MCF 10A (cell line): ENCODE measurements at regions of chr4 and their contacts with region 1.

Region 1: DNA sequence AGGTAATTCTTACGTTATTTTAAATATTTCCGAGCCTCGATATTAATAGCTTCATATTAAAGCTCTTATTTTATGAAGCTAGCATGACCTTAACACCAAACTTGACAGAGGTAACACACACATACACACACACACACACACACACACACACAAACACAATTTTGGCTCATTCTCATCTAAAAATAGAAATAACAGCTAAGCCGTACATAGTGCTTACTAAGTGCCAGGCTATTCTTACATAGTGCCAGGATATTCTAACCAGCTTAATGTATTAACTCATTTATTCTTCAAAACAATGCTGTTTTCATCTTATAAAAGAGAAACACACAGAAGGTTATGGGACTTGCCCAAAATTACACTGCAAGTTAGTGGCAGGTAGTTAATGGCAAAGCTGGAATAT is 87.0 kb upstream of the BLTP1 start:
- DNase-seq: no peak
- H3K4me3 Mint-ChIP-seq: no peak overlapping the region
- H3K27ac Mint-ChIP-seq: no peak overlapping the region
- H3K4me1 Mint-ChIP-seq: peaks cover 5% of the 10 kb centered on the region
- H3K27me3 Mint-ChIP-seq: no peaks in the 10 kb centered on the region
- CTCF ChIP-seq: no peak

Region 2: GRCh38 chr4:121998002-121998401 is 67.1 kb before region 1 on chr4:
- CTCF ChIA-PET with region 1: no interaction called
- POLR2A ChIA-PET with region 1: no interaction called
- intact Hi-C with region 1: no loop called
- DNase-seq: peak; percentile 33
- H3K4me3 Mint-ChIP-seq: no peak overlapping the region
- H3K27ac Mint-ChIP-seq: no peak overlapping the region
- H3K4me1 Mint-ChIP-seq: peaks cover 6% of the 10 kb centered on the region
- H3K27me3 Mint-ChIP-seq: peaks cover 13% of the 10 kb centered on the region
- CTCF ChIP-seq: no peak

Region 3: GRCh38 chr4:122091836-122092405 is 26.8 kb after region 1 on chr4:
- CTCF ChIA-PET with region 1: no interaction called
- POLR2A ChIA-PET with region 1: no interaction called
- intact Hi-C with region 1: loop called (anchors 1 kb)
- DNase-seq: no peak
- H3K4me3 Mint-ChIP-seq: no peak overlapping the region
- H3K27ac Mint-ChIP-seq: no peak overlapping the region
- H3K4me1 Mint-ChIP-seq: no peaks in the 10 kb centered on the region
- H3K27me3 Mint-ChIP-seq: no peaks in the 10 kb centered on the region
- CTCF ChIP-seq: no peak

Region 4: GRCh38 chr4:122104189-122104588 is 39.0 kb after region 1 on chr4:
- CTCF ChIA-PET with region 1: no interaction called
- POLR2A ChIA-PET with region 1: no interaction called
- intact Hi-C with region 1: no loop called
- DNase-seq: peak; percentile 11
- H3K4me3 Mint-ChIP-seq: no peak overlapping the region
- H3K27ac Mint-ChIP-seq: no peak overlapping the region
- H3K4me1 Mint-ChIP-seq: no peaks in the 10 kb centered on the region
- H3K27me3 Mint-ChIP-seq: no peaks in the 10 kb centered on the region
- CTCF ChIP-seq: no peak